CD8-positive, alpha-beta memory T cell (primary cell): ENCODE measurements at regions of chr3 and their contacts with region 1.

Region 1: DNA sequence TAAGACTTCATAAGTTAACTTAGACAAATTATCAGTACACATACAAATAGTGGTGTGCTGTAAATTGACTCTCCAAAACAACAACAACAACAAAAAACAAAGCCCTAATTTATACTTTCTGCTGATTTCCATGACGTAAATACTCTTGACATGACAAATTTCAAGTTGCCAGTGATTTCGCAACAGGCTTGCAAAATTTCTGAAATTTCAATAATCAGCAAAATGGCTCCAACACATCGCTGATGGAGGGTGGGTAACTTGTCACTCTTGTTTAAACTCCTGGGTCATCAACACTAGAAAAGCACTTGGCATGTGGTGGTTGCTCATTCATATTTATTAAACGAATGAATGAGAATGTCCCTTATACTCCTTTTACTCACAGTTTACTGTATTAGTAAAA is 205.2 kb upstream of the SATB1 start:
- DNase-seq: no peak
- H3K4me3 ChIP-seq: no peak overlapping the region
- H3K4me3 Mint-ChIP-seq: no peak overlapping the region
- H3K27ac ChIP-seq: no peak overlapping the region
- H3K27ac Mint-ChIP-seq: no peak overlapping the region
- H3K4me1 ChIP-seq: no peaks in the 10 kb centered on the region
- H3K4me1 Mint-ChIP-seq: peaks cover 0 to 4% (median 0%) of the 10 kb centered on the region in 3 donors
- H3K27me3 ChIP-seq: no peaks in the 10 kb centered on the region
- H3K27me3 Mint-ChIP-seq: no peaks in the 10 kb centered on the region

Region 2: DNA sequence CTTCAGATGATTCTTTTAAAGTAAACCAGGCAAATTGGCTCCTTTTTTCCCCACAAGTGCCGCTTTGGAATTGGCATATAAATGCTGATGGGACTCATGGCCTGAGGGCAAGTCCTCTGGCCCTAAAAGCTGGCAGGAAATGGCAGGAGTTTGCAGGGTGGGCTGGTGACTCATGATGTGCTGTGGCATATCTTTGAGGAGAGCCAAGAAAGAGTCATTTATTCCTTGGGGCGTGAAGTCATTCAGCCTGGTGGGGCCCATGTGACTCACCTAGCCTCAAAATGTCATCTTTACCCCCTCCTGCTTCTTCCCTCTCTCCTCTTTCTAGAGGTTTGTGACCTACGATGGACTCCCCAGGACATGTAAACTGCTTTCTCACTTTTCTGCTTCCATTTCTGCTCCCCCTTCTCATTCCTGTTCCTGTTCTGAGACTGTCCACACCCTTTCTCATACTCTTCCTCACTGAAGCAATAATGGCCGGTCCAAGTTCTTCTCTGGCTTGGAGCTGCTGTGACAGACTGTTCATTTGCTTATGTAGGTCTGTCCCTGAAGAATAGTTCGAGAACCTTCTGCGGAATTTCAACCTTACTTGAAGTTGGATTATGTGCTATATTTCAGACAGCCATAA is 531.2 kb before region 1 on chr3:
- CTCF ChIA-PET with region 1: no interaction called
- POLR2A ChIA-PET with region 1: interaction called, 11 read pairs
- DNase-seq: no peak
- H3K4me3 ChIP-seq: no peak overlapping the region
- H3K4me3 Mint-ChIP-seq: no peak overlapping the region
- H3K27ac ChIP-seq: no peak overlapping the region
- H3K27ac Mint-ChIP-seq: no peak overlapping the region
- H3K4me1 ChIP-seq: no peaks in the 10 kb centered on the region
- H3K4me1 Mint-ChIP-seq: no peaks in the 10 kb centered on the region
- H3K27me3 ChIP-seq: no peaks in the 10 kb centered on the region
- H3K27me3 Mint-ChIP-seq: peaks cover 8 to 46% of the 10 kb centered on the region in 2 donors